Activated B cell treated with CpG ODN at 0.5 μM for 24 hours (primary cell): ENCODE measurements at regions of chr7 and their contacts with region 1.

Region 1: GRCh38 chr7:151876899-151877777 is at the start of gene PRKAG2:
- DNase-seq: peak; percentile 75
- ATAC-seq: peak; percentile 60
- H3K4me3 Mint-ChIP-seq: peak within 1 kb of the TSS; percentile 97
- H3K27ac Mint-ChIP-seq: peak within 1 kb of the TSS; percentile 91
- H3K4me1 Mint-ChIP-seq: peaks cover 15% of the 10 kb centered on the region
- H3K27me3 Mint-ChIP-seq: no peaks in the 10 kb centered on the region
- CTCF ChIP-seq: no peak
- total RNA-seq, gene PRKAG2: 19.7 TPM in 2 replicates

Region 2: GRCh38 chr7:151226875-151227782 is 650.0 kb before region 1 on chr7 and contains the start of gene ABCF2:
- CTCF ChIA-PET with region 1: no interaction called
- POLR2A ChIA-PET with region 1: interaction called, 3 read pairs
- intact Hi-C with region 1: loop called (anchors 5 kb)
- DNase-seq: peak; percentile 97
- ATAC-seq: peak; percentile 99
- H3K4me3 Mint-ChIP-seq: peak within 1 kb of the TSS; percentile 99
- H3K27ac Mint-ChIP-seq: peak within 1 kb of the TSS; percentile 91
- H3K4me1 Mint-ChIP-seq: peaks cover 41% of the 10 kb centered on the region
- H3K27me3 Mint-ChIP-seq: no peaks in the 10 kb centered on the region
- CTCF ChIP-seq: no peak
- total RNA-seq, gene ABCF2: 47.3 and 52.4 TPM in 2 replicates

Region 3: DNA sequence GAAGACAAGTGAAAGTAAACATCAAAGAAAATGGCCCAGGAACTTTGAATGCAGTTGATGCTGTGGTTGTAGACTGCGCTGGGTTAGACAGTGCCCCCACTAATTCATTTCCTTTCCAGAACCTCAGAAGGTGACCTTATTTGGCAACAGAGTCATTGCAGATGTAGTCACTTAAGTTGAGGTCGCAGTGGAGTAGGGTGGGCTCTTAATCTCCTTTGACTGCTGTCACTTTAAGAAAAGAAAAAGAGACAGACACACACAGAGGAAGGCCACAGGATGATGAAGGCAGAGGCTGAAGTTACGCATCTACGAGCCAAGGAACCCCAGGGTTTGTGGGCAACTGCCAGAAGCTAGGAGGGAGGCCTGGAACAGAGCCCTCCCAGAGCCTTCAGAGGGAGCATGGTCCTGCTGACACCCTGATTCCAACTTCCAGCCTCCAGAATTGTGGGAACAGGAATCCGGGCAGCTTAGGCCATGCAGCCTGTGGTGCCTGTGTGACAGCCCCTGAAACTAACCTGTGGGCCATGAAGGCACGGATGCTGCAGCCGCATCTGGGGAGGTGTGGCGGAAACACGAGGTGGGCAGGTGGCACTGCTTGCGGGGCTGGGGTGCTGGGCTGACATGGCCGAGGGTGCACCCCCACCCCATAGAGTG is 107.8 kb before region 1 on chr7:
- CTCF ChIA-PET with region 1: no interaction called
- POLR2A ChIA-PET with region 1: no interaction called
- intact Hi-C with region 1: no loop called
- DNase-seq: no peak
- ATAC-seq: no peak
- H3K4me3 Mint-ChIP-seq: no peak overlapping the region
- H3K27ac Mint-ChIP-seq: no peak overlapping the region
- H3K4me1 Mint-ChIP-seq: peaks cover 4% of the 10 kb centered on the region
- H3K27me3 Mint-ChIP-seq: no peaks in the 10 kb centered on the region
- CTCF ChIP-seq: no peak

Region 4: DNA sequence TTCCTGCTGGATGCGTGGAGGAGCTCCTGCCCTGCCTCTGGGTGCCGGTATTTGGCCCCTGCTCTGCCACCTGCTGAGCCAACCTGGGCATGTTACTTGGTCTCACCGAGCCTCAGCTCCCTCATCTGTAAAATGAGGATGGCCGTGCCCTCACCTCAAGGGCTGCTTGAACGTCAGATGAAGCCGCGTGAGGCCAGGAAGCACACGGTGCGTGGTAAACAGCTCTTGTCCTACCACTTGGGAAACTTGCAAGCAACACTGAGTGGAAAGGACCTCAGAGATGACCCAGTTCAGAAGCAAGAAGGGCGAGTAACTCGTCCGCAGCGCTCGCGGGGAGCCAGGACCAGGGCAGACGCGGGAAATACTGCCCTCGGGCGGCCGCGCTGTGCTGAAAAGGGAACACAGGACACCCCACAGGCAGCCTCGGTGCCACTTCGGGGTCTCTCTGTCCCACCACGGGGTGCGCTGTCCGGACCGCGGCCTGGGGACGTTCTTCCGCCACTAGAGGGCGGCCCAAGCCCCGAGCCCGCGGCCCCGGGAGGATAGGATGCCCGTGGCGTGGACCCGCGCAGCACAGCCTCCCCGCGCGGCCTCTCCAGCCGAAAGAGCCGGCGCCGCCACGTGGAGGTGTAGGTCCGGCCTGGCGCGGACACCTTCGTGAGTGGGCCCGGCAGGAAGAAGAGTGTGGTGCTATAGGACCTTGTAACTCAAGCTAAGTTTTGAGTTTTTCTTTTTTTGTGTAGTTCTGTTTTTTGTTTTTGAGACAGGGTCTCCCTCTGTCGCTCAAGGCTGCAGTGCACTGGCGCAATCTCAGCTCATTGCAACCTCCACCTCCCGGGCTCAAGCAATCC is 94.3 kb before region 1 on chr7:
- CTCF ChIA-PET with region 1: interaction called, 5 read pairs
- POLR2A ChIA-PET with region 1: interaction called, 6 read pairs
- intact Hi-C with region 1: loop called (anchors 1 kb)
- DNase-seq: peak; percentile 77
- ATAC-seq: peak; percentile 95
- H3K4me3 Mint-ChIP-seq: peak overlapping the region; percentile 74
- H3K27ac Mint-ChIP-seq: no peak overlapping the region
- H3K4me1 Mint-ChIP-seq: peaks cover 7% of the 10 kb centered on the region
- H3K27me3 Mint-ChIP-seq: no peaks in the 10 kb centered on the region
- CTCF ChIP-seq: peak; percentile 63

Region 5: DNA sequence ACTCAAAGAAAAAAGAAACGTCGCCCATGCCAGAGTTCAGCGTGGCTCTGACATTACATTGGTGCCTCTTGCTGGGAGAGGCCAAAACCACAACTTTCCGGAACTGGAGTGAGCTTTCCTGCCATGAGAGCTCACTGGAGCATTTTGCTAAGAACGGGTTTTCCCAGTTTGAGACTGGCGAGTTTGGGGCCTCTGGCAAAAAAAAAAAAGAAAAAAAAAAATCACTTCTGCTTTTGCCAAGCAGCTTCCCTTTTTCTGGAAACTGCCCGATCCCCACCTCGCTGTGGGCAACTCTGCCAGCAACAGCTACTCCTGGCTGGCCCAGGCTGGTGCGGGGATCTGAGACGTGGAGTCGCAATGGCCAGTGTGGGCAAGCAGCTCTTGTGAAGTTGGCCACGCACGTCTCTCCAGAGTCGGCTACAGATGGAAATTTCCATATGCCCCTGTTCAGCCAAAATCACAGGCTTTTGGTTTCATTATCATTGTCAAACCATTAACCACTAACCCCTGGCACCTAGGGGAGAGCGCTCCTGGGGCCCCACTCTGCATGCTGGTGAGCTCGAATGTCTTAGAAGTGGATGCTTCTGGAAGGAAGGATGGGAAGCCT is 25.9 kb before region 1 on chr7:
- CTCF ChIA-PET with region 1: no interaction called
- POLR2A ChIA-PET with region 1: interaction called, 23 read pairs
- intact Hi-C with region 1: loop called (anchors 1 kb)
- DNase-seq: peak; percentile 42
- ATAC-seq: peak; percentile 79
- H3K4me3 Mint-ChIP-seq: peak overlapping the region; percentile 81
- H3K27ac Mint-ChIP-seq: peak overlapping the region; percentile 85
- H3K4me1 Mint-ChIP-seq: peaks cover 32% of the 10 kb centered on the region
- H3K27me3 Mint-ChIP-seq: no peaks in the 10 kb centered on the region
- CTCF ChIP-seq: no peak

Region 6: DNA sequence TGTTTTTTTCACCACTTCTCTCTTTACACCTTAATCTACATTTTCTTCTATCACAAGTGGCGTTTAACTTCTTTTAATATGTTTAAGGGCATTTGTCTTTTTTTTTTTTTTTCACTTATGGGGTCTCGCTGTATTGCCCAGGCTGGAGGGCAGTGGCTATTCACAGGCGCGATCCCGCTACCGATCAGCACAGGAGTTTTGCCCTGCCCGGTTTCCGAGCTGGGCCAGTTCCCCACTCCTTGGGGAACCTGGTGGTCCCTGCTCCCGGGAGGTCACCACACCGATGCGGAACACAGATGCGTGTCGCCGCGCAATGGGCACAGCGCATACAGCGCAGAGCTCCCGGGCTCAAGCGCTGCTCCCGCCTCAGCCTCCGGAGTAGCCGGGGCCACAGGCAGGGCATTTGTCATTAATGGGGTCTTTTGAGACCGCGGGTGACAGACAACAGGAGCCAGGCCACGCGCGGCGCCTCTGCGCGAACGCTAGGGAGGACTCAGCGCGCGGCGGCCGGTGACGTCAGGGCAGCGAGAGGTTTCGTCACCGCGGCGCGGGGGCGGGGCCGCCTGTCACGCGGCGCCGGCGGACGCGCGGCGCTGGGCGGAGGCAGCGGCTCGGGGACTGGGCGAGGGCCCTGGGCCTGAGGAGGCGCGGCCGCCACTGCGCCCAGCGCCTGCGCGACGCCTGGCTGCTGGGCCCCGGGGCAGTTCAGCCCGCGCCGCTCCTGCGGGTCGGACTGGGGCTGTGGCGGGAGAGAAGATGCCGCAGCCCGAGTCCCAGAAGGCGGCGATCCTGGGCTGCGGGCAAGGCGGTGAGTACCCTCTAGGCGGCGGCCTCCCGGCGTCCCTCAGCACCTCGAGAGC is 148.2 kb after region 1 on chr7 and contains the start of gene GALNT11:
- CTCF ChIA-PET with region 1: no interaction called
- POLR2A ChIA-PET with region 1: no interaction called
- intact Hi-C with region 1: loop called (anchors 1 kb)
- DNase-seq: peak; percentile 90
- ATAC-seq: peak; percentile 92
- H3K4me3 Mint-ChIP-seq: peak within 1 kb of the TSS; percentile 87
- H3K27ac Mint-ChIP-seq: peak within 1 kb of the TSS; percentile 81
- H3K4me1 Mint-ChIP-seq: peaks cover 11% of the 10 kb centered on the region
- H3K27me3 Mint-ChIP-seq: no peaks in the 10 kb centered on the region
- CTCF ChIP-seq: no peak
- total RNA-seq, gene GALNT11: 9.0 and 10.8 TPM in 2 replicates

Region 7: DNA sequence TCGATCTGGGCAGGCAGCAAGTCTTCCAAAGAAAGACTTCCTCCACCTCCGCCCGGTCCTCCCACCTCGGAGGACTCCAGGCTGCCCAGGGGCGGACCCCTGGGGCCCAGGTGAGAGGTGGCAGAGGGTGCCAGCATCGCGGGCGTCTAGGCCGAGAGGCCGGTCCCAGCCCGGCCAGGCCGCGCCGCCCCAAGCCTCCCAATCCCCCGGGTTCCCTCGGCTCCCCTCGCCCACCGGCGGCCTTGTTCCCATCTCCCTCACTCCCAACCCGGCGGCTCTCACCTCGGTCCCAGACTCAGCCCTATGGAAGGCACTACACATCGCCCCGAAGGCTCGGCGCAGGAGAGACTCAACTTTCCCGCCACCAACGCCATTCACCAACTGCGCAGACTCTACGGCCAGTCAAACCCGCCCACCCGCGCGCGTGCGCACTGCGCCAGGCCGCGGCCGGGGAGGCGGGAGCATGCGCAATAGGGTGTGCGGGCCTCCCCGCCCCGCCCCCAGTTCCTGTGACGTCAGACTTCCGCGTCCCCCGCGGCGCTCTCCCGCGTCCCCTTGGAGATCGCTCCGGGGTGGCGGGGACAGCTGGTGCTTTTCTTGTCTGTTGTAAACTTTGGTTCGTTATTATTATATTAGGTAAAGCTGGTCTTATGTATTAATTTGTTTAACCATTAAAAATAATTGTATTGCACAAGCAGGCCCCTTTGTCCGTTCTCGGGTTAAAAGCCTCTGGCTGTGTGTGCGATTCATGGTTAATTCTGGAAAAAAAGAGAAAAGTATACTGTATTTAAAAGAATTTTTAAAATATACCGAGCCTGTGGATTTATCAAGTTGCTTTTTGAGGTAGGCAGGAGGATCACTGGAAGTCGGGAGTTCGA is 798.9 kb after region 1 on chr7 and contains the start of gene XRCC2:
- CTCF ChIA-PET with region 1: no interaction called
- POLR2A ChIA-PET with region 1: no interaction called
- intact Hi-C with region 1: loop called (anchors 1 kb)
- DNase-seq: peak; percentile 99
- ATAC-seq: peak; percentile 94
- H3K4me3 Mint-ChIP-seq: peak within 1 kb of the TSS; percentile 94
- H3K27ac Mint-ChIP-seq: peak within 1 kb of the TSS; percentile 93
- H3K4me1 Mint-ChIP-seq: peaks cover 11% of the 10 kb centered on the region
- H3K27me3 Mint-ChIP-seq: no peaks in the 10 kb centered on the region
- CTCF ChIP-seq: no peak
- total RNA-seq, gene XRCC2: 1.7 and 2.3 TPM in 2 replicates